WTC11 (cell line): ENCODE measurements at regions of chr3 and their contacts with region 1.

Region 1: DNA sequence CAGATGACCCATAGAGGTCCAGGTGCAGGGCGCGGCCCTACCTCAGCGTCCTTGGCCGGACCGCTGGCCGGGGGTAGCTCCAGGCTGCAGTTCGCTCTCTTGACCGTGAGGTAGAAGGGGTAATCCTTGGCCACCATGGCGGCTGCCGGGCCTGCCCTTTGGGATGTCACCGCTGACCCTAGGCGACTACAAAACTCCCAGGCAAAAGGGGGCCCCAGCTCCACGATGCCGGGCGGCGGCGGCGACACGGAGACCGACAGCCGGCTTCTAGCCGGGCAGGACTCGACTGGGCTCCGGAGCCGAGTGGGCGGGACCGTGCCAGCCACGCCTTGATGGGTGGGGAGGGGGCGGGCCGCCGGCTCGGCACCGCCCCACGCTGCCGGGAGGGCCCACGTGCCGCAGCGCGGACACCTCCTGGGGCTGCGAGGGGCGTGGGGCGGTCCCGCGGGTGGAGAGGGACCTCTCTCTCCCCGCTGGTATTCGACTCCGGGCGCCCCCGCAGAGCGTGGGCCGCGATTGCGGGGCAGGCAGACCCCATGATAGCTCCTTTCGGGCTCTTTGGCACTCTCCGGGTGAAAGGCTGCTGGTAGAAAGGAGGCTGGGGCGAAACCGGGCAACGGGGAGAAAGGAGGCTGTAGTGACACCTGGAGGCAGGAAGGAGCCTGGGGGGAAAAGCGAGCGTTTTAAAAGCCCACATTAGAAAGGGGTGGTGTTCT is at the start of gene ARHGEF3:
- DNase-seq: peak; percentile 83
- ATAC-seq: peak; percentile 91
- H3K4me3 Mint-ChIP-seq: peak within 1 kb of the TSS; percentile 80
- H3K27ac Mint-ChIP-seq: no peak within 1 kb of the TSS
- H3K4me1 Mint-ChIP-seq: peaks cover 22% of the 10 kb centered on the region
- H3K27me3 Mint-ChIP-seq: peaks cover 13% of the 10 kb centered on the region
- CTCF ChIP-seq: no peak
- total RNA-seq, gene ARHGEF3: 4.6 to 7.9 TPM (median 7.5 TPM) in 3 replicates

Region 2: DNA sequence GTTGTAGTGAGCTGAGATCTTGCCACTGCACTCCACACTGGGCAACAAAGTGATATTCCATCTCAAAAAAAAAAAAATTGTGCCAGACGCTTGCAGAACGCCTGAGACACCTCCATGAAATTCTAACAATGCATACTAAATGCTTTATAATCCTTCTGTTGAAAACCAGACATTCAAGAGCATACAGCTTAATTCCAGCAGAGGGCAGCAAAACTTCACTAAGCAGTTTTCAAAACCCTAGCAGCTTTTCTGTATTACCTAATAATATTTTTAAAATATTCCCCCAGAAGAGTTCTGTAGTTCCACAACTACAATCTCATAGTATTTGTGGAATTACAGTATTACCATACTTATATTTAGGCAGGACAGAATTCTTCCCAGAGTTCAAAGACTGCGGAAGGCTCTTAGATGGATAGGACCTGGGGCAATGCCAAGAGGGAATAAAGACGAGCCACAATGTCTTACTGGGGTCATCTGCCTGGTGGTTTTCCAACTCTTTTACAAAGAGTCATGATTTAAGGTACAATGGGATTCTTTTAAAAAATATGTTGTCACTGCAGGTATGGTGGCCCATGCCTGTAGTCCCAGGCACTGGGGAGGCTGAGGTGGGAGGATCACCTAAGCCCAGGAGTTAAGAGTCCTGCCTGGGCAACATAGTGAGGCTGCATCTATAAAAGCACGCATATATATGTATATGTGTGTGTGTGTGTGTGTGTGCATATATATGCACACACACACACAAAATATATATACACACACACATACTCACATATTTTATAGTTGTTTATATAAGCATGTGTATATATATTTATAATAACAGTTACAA is 99.1 kb before region 1 on chr3:
- CTCF ChIA-PET with region 1: interaction called, 98 read pairs
- POLR2A ChIA-PET with region 1: no interaction called
- DNase-seq: no peak
- ATAC-seq: 0 out of 2 replicates have a peak, but pooled peaks have one; percentile 39
- H3K4me3 Mint-ChIP-seq: no peak overlapping the region
- H3K27ac Mint-ChIP-seq: no peak overlapping the region
- H3K4me1 Mint-ChIP-seq: peaks cover 7% of the 10 kb centered on the region
- H3K27me3 Mint-ChIP-seq: no peaks in the 10 kb centered on the region; the same call in 1 of the 2 replicates
- CTCF ChIP-seq: peak; percentile 59

Region 3: DNA sequence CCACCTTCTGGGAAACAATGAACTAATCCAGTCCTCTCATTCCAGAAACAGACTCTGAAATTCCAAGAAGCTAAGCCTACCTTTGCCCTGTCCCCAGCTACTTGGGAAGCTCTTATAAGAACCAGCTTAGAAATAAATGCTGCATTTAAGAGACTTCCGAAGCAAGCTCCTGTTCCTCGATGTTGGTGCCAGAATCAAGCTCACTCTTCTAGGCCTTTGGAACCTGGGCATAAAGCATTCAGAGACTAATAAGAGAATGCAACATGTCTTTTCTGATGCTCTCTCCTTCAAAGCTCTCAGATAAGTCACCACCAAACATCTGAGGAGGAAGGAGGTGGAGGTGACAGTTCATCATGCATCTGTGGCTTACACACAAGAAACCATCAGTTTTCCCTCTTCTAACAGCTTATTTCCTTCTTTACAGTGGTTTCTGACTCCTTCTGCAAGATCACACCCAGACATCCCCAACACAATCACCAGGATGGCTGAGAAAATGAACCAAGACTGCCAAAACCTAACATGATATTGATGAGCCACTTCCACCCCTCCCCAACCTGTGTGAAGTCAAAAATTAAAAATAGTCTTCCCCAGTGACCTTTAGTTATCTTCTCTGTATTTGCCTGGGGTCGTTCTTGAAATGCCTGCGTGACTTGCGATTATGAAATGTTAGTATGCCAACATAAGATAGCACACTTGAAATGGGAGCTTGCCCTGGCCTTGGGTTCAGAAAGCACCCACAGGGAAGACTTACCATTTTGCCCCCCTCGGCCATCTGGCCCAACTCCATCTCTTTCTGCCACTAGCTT is 11.6 kb before region 1 on chr3:
- CTCF ChIA-PET with region 1: interaction called, 32 read pairs
- POLR2A ChIA-PET with region 1: no interaction called
- DNase-seq: no peak
- ATAC-seq: no peak
- H3K4me3 Mint-ChIP-seq: no peak overlapping the region
- H3K27ac Mint-ChIP-seq: no peak overlapping the region
- H3K4me1 Mint-ChIP-seq: peaks cover 8% of the 10 kb centered on the region; the same call in 1 of the 2 replicates
- H3K27me3 Mint-ChIP-seq: no peaks in the 10 kb centered on the region
- CTCF ChIP-seq: no peak

Region 4: GRCh38 chr3:56819016-56819809 is 17.4 kb after region 1 on chr3:
- CTCF ChIA-PET with region 1: interaction called, 25 read pairs
- POLR2A ChIA-PET with region 1: interaction called, 3 read pairs
- DNase-seq: no peak
- ATAC-seq: no peak
- H3K4me3 Mint-ChIP-seq: no peak overlapping the region
- H3K27ac Mint-ChIP-seq: no peak overlapping the region
- H3K4me1 Mint-ChIP-seq: peaks cover 17% of the 10 kb centered on the region
- H3K27me3 Mint-ChIP-seq: no peaks in the 10 kb centered on the region
- CTCF ChIP-seq: no peak

Region 5: GRCh38 chr3:56988458-56989168 is 186.8 kb after region 1 on chr3:
- CTCF ChIA-PET with region 1: interaction called, 112 read pairs
- POLR2A ChIA-PET with region 1: interaction called, 6 read pairs
- DNase-seq: peak; percentile 82
- ATAC-seq: peak; percentile 72
- H3K4me3 Mint-ChIP-seq: peak overlapping the region; percentile 45; the same call in 1 of the 2 replicates
- H3K27ac Mint-ChIP-seq: 0 out of 2 replicates have a peak overlapping the region, but pooled peaks have one; percentile 20
- H3K4me1 Mint-ChIP-seq: peaks cover 26% of the 10 kb centered on the region
- H3K27me3 Mint-ChIP-seq: peaks cover 3% of the 10 kb centered on the region
- CTCF ChIP-seq: peak; percentile 80